Posterior cingulate gyrus (tissue), 11 donors: ENCODE measurements at regions of chr4 and their contacts with region 1.

Region 1: GRCh38 chr4:8688041-8688937 is 95.7 kb downstream of the CPZ start:
- DNase-seq: peak in 7 of 10 donors; percentile 45 to 87 (median 61)

Region 2: GRCh38 chr4:8644461-8644891 is 43.8 kb before region 1 on chr4:
- intact Hi-C with region 1: no loop called
- DNase-seq: peak in 2 of 10 donors; percentile 52 to 55

Region 3: DNA sequence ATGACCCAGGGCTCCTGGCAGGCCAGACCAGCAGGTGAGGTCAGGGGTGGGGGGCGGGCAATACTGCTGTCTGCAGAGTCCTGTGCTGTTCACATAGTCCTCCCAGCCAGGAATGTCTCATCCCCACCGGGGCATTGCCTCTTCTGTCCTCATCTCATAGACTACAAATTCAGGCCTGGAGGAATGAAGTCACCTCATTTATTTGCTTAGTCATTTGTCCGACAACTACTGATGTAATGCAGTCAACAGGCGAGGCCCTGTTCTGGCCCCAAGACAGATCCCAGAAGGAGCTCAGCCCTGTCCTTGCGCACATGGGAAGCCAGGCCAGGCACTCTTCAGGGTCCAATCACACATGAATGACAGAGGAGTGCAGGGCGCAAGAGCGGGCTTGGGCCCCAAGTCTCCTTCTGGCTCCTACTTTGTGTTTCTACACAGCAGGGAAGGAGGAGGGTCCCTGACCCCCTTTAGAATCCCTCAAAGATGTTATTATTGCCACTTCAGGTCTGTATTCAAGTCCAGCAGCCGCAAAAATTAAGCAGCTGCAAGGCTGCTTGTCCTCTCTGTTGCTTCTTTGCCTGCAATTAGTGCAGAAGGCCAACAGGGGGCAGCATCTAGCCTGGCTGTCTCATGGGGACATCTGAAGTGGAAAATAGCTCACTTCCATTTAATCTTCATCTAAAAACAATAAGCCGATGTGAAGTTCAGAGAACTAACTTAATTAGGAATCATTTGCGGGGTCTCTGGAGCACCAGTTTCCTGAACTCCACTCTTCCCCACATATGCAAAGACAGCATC is 198.5 kb after region 1 on chr4:
- intact Hi-C with region 1: loop called (anchors 5 kb)
- DNase-seq: no peak